ENCODE measurements at regions of chr20 and their contacts with region 1.

Region 1: GRCh38 chr20:34022154-34022838 is 28.6 kb downstream of the RALY start:
- DNase-seq: no peak
- ATAC-seq: peak; percentile 75
- H3K4me3 Mint-ChIP-seq: no peak overlapping the region
- H3K27ac Mint-ChIP-seq: peak overlapping the region; percentile 60
- H3K4me1 Mint-ChIP-seq: peaks cover 59% of the 10 kb centered on the region
- H3K27me3 Mint-ChIP-seq: no peaks in the 10 kb centered on the region

Region 2: DNA sequence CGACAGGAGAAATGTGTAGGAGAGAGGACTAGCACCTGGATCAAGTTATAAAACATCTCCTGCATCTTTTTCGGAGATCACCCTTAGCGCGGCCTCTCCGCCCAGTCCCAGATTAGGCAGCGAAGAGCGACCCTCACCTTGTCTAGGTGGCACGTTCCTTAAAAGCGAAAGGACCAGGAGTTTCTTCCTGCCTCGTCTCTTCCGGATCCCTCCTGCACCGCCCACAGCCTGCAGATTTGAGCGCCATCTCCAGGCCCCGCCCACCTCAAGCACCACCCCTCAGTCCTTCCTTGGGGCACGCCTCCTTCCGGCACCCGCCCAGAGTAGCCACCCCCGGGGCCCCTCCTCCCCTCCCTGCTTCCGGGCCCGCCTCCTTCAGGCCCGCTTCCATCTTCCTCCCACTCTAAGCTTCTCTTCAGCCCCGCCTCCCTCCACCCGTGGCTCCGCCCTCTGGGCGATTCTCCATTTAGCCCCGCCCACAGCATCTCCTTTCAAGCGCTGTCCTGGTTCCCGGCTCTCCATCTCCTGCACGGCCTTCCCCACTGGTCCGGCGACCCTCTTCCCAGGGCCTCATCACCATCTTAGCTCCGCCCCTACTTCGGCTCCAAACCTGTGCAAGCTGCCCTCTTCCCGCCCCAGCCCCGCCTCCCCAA is 29.2 kb before region 1 on chr20:
- CTCF ChIA-PET with region 1: interaction called, 10 read pairs
- POLR2A ChIA-PET with region 1: interaction called, 11 read pairs
- DNase-seq: peak; percentile 100
- ATAC-seq: peak; percentile 85
- H3K4me3 Mint-ChIP-seq: peak overlapping the region; percentile 96
- H3K27ac Mint-ChIP-seq: peak overlapping the region; percentile 99
- H3K4me1 Mint-ChIP-seq: peaks cover 51% of the 10 kb centered on the region
- H3K27me3 Mint-ChIP-seq: no peaks in the 10 kb centered on the region

Region 3: GRCh38 chr20:34010405-34010931 is 11.8 kb before region 1 on chr20:
- CTCF ChIA-PET with region 1: interaction called, 13 read pairs
- POLR2A ChIA-PET with region 1: no interaction called
- DNase-seq: no peak
- ATAC-seq: no peak
- H3K4me3 Mint-ChIP-seq: no peak overlapping the region
- H3K27ac Mint-ChIP-seq: peak overlapping the region; percentile 75
- H3K4me1 Mint-ChIP-seq: peaks cover 57% of the 10 kb centered on the region
- H3K27me3 Mint-ChIP-seq: no peaks in the 10 kb centered on the region